Endothelial cell of umbilical vein (primary cell): ENCODE measurements at regions of chr5 and their contacts with region 1.

Region 1: DNA sequence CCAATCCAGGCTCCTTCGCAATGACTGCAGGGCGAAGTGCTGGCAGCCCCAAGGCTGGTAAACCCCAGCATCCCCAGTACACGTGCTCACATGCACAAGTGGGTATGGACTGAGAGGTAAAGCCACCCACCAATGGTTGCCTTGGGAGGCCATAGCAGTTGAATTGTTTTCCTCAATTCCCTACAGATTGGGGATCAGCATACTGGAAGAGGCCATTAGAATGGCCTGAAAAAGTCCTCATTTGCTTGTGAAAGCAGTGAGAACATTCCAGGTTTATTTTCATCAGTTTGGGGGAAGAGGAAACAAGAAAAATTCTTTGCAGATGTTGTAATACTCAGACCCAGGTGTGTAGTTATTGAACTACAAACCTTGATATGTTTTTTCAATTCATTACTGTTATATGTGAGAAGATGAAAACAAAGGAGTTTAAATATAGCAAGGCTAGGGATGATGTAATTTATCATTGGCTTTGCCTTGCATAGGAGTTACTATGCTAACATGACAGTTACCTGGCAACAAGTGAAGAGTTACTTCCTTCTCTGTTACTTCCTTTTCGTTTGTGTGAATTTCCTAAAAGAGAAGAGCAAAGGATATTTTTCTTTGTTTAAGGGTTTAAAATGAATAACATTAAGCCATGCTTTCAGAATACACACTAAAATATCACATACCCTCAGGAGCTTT is 36.4 kb downstream of the MTMR12 start:
- DNase-seq: peak; percentile 91
- H3K4me3 ChIP-seq: no peak overlapping the region
- H3K27ac ChIP-seq: peak overlapping the region; percentile 100
- H3K4me1 ChIP-seq: peaks cover 41% of the 10 kb centered on the region
- H3K27me3 ChIP-seq: no peaks in the 10 kb centered on the region
- CTCF ChIP-seq: no peak
- POLR2A ChIP-seq: no peak

Region 2: DNA sequence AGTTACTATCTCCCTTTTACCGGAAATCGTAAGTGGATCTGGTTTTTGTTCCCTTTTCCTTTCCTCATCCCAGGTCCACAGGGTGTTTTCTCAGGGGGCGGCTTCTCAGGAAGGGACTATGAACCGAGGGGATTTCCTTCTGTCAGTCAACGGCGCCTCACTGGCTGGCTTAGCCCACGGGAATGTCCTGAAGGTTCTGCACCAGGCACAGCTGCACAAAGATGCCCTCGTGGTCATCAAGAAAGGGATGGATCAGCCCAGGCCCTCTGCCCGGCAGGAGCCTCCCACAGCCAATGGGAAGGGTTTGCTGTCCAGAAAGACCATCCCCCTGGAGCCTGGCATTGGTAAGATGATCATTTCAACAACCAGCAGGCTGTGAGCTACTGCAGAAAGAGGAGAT is 178.0 kb before region 1 on chr5:
- CTCF ChIA-PET with region 1: no interaction called
- POLR2A ChIA-PET with region 1: no interaction called
- dilution Hi-C with region 1: no loop called
- intact Hi-C with region 1: loop called (anchors 1 kb)
- DNase-seq: peak; percentile 96
- H3K4me3 ChIP-seq: peak overlapping the region in 1 of 3 experiments; percentile 43
- H3K27ac ChIP-seq: peak overlapping the region; percentile 96
- H3K4me1 ChIP-seq: peaks cover 45% of the 10 kb centered on the region
- H3K27me3 ChIP-seq: no peaks in the 10 kb centered on the region
- CTCF ChIP-seq: no peak
- POLR2A ChIP-seq: no peak

Region 3: DNA sequence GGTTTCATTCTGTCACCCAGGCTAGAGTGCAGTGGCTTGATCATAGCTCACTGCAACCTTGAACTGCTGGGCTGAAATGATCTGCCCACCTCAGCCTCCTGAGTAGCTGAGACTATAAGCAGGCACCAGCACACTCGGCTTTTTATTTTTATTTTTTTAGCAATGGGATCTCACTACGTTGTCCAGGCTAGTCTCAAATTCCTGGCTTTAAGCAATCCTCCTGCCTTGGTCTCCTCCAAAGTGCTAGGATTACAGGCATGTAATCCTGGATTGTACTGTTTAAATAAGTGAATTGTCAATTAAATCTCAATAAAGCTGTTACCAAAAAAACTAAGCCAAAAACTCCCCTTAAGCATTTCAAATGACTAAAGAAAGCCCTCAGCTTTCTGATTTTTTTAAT is 121.1 kb before region 1 on chr5:
- CTCF ChIA-PET with region 1: no interaction called
- POLR2A ChIA-PET with region 1: interaction called, 10 read pairs
- dilution Hi-C with region 1: no loop called
- intact Hi-C with region 1: no loop called
- DNase-seq: no peak
- H3K4me3 ChIP-seq: no peak overlapping the region
- H3K27ac ChIP-seq: no peak overlapping the region
- H3K4me1 ChIP-seq: peaks cover 10% of the 10 kb centered on the region
- H3K27me3 ChIP-seq: no peaks in the 10 kb centered on the region
- CTCF ChIP-seq: no peak
- POLR2A ChIP-seq: no peak

Region 4: GRCh38 chr5:32174011-32174870 is 102.1 kb before region 1 on chr5 and contains the start of gene GOLPH3:
- CTCF ChIA-PET with region 1: no interaction called
- POLR2A ChIA-PET with region 1: no interaction called
- dilution Hi-C with region 1: no loop called
- intact Hi-C with region 1: loop called (anchors 1 kb)
- DNase-seq: peak; percentile 82
- H3K4me3 ChIP-seq: peak within 1 kb of the TSS; percentile 89 to 99 (median 96)
- H3K27ac ChIP-seq: peak within 1 kb of the TSS; percentile 91
- H3K4me1 ChIP-seq: peaks cover 17% of the 10 kb centered on the region
- H3K27me3 ChIP-seq: peaks cover 0 to 2% of the 10 kb centered on the region in 2 experiments
- CTCF ChIP-seq: no peak
- POLR2A ChIP-seq: peak; percentile 97
- total RNA-seq, gene GOLPH3: 67.2 and 70.2 TPM in 2 replicates

Region 5: GRCh38 chr5:32312647-32313523 is 36.6 kb after region 1 on chr5 and contains the start of gene MTMR12:
- CTCF ChIA-PET with region 1: no interaction called
- POLR2A ChIA-PET with region 1: interaction called, 3 read pairs
- dilution Hi-C with region 1: no loop called
- intact Hi-C with region 1: loop called (anchors 1 kb)
- DNase-seq: peak; percentile 100
- H3K4me3 ChIP-seq: peak within 1 kb of the TSS; percentile 55 to 88 (median 80)
- H3K27ac ChIP-seq: peak within 1 kb of the TSS; percentile 92
- H3K4me1 ChIP-seq: peaks cover 7% of the 10 kb centered on the region
- H3K27me3 ChIP-seq: no peaks in the 10 kb centered on the region
- CTCF ChIP-seq: no peak
- POLR2A ChIP-seq: peak; percentile 60
- total RNA-seq, gene MTMR12: 35.4 and 38.6 TPM in 2 replicates

Region 6: DNA sequence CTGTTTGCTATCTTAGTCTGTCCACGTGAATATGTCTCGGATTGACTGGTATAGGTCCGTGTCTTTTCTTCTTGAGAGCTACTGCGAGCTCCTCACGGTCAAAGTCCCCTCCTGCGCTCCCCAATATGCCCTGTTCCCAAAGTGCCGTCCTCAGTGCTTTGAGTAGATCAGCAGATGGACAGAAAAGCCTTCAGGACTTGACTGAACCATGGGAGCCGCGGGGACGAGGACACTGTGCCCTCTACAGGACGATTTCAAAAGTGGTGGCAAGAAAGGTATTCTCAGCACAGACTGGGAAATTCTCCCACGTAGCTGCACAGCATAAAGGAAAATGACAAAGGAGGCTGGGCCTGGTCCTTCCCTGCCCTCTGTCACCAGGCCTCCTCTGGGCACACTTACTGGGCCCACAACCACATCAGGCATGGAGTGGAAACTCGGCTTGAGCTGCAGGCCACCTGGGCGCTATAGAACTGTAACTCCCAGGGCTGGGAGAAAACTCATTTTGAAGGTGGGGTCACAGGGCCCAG is 53.1 kb after region 1 on chr5:
- CTCF ChIA-PET with region 1: interaction called, 21 read pairs
- POLR2A ChIA-PET with region 1: no interaction called
- dilution Hi-C with region 1: no loop called
- intact Hi-C with region 1: loop called (anchors 1 kb)
- DNase-seq: peak; percentile 80
- H3K4me3 ChIP-seq: no peak overlapping the region
- H3K27ac ChIP-seq: no peak overlapping the region
- H3K4me1 ChIP-seq: no peaks in the 10 kb centered on the region
- H3K27me3 ChIP-seq: no peaks in the 10 kb centered on the region
- CTCF ChIP-seq: peak; percentile 60 to 80
- POLR2A ChIP-seq: no peak

Region 7: DNA sequence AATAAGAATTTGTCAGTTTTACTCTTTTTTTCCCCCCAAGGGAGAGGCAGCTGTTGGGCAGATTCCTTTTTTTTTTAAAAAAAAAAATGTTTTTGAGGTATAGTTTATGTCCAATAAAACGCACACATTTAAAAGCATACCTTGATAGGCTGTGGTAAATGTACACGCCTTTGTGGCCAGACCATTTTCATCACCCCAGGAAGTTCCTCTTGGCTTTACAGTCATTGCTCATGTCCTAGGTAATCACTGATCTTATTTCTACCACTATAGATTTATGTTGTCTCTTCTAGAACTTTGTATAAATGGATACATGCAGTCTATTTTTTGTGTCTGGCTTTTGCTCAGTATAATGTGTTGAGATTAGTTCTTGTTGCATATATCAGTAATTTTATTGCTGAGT is 318.8 kb after region 1 on chr5:
- CTCF ChIA-PET with region 1: interaction called, 4 read pairs
- POLR2A ChIA-PET with region 1: interaction called, 3 read pairs
- dilution Hi-C with region 1: no loop called
- intact Hi-C with region 1: loop called (anchors 2 kb)
- DNase-seq: no peak
- H3K4me3 ChIP-seq: no peak overlapping the region
- H3K27ac ChIP-seq: no peak overlapping the region
- H3K4me1 ChIP-seq: peaks cover 40% of the 10 kb centered on the region
- H3K27me3 ChIP-seq: no peaks in the 10 kb centered on the region
- CTCF ChIP-seq: no peak
- POLR2A ChIP-seq: no peak